ENCODE measurements at regions of chr11 and their contacts with region 1.

Region 1: GRCh38 chr11:29679996-29680395 is 336.8 kb downstream of the KCNA4 start:
- DNase-seq: no peak
- ATAC-seq: no peak
- H3K4me3 Mint-ChIP-seq: no peak overlapping the region
- H3K27ac Mint-ChIP-seq: no peak overlapping the region
- H3K4me1 Mint-ChIP-seq: peaks cover 3% of the 10 kb centered on the region; the same call in 1 of the 2 replicates
- H3K27me3 Mint-ChIP-seq: no peaks in the 10 kb centered on the region; the same call in 1 of the 2 replicates
- CTCF ChIP-seq: no peak

Region 2: DNA sequence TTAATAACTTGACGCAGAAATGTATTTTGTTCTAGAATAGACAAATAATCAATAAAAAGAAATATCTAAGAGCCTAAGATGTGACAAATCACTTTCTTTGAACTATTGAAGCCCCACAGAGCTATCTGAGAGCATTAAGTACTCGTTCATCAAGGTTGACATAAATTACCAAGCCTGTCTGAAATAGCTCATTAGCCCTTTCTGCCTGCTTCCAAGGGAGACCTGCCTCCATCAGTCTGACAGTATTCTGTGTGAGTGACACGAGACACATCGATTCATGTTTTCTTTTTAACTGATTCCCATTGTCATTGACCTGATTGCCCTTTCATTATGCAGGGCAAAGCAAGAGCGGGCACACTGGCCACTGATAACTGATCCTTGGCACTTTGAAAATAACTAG is 10.7 kb before region 1 on chr11:
- CTCF ChIA-PET with region 1: no interaction called
- POLR2A ChIA-PET with region 1: no interaction called
- DNase-seq: no peak
- ATAC-seq: no peak
- H3K4me3 Mint-ChIP-seq: no peak overlapping the region
- H3K27ac Mint-ChIP-seq: no peak overlapping the region
- H3K4me1 Mint-ChIP-seq: no peaks in the 10 kb centered on the region
- H3K27me3 Mint-ChIP-seq: no peaks in the 10 kb centered on the region; the same call in 1 of the 2 replicates
- CTCF ChIP-seq: no peak

Region 3: DNA sequence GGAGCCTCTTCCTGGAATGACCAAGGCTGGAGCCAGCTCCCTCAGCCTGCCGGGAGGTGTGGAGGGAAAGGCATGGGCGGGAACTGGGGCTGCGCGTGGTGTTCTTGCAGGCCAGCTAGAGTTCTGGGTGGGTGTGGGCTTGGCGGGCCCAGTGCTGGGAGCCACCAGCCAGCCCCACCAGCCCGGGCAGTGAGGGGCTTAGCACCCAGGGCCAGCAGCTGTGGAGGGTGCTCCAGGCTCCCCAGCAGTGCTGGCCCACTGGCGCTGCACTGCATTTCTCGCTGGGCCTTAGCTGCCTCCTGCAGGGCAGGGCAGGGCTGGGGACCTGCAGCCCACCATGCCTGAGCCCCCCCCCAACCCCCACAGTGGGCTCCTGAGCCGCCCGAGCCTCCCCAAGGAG is 32.6 kb after region 1 on chr11:
- CTCF ChIA-PET with region 1: no interaction called
- POLR2A ChIA-PET with region 1: interaction called, 11 read pairs
- DNase-seq: no peak
- ATAC-seq: no peak
- H3K4me3 Mint-ChIP-seq: no peak overlapping the region
- H3K27ac Mint-ChIP-seq: no peak overlapping the region
- H3K4me1 Mint-ChIP-seq: peaks cover 20% of the 10 kb centered on the region
- H3K27me3 Mint-ChIP-seq: no peaks in the 10 kb centered on the region
- CTCF ChIP-seq: no peak

Measured in WTC11 (cell line).